Adrenal gland (tissue), 19 donors: ENCODE measurements at regions of chr9 and their contacts with region 1.

Region 1: DNA sequence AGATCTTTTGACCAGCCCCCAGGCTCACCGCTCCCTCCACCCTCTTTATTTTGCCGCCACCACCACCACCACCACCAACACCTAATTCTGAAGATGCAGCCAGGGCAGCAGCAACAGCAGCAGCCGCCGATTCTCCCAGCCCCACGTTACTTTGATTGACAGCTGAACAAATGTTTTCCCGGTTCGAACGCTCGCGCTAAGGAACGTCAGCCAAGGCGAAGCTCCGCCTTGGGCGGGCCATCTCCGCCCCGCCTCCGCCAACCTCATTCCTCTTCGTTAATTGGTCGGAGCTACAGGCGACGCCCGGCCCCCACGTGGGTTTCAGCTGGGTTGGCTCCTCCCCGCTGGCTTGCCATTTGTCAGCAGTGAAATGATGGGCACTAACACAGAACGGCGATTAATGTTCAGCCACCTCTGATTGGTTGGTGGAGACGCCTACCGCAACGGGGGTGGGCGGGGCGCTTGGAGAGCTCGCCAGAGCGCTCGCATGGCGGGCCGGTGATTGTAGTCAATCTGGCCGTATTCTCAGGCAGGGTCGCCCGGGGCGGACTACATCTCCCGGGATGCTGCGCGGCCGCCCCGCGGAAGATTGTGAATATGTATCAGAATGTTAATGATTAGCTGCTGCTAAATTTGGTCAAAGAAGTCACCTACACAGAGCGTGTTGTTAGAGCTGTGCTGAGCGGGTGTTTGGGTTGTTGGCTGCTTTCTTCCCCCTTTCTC is at the start of gene TLE4:
- DNase-seq: peak; percentile 99 to 100 (median 100)
- H3K4me3 ChIP-seq: peak within 1 kb of the TSS; percentile 78 to 96 (median 85)
- H3K27ac ChIP-seq: peak within 1 kb of the TSS; percentile 81 to 97 (median 90)
- H3K4me1 ChIP-seq: peaks cover 13 to 33% of the 10 kb centered on the region in 2 donors
- H3K27me3 ChIP-seq: no peaks in the 10 kb centered on the region
- CTCF ChIP-seq: no peak
- POLR2A ChIP-seq: peak; percentile 95 to 99
- total RNA-seq, gene TLE4: 38.2 to 70.5 (median 43.4) TPM

Region 2: GRCh38 chr9:78848061-78848460 is 723.4 kb before region 1 on chr9:
- intact Hi-C with region 1: no loop called
- DNase-seq: no peak
- H3K4me3 ChIP-seq: no peak overlapping the region
- H3K27ac ChIP-seq: no peak overlapping the region
- H3K4me1 ChIP-seq: no peaks in the 10 kb centered on the region
- H3K27me3 ChIP-seq: no peaks in the 10 kb centered on the region
- CTCF ChIP-seq: no peak
- POLR2A ChIP-seq: no peak

Region 3: GRCh38 chr9:79686381-79687130 is 115.1 kb after region 1 on chr9:
- intact Hi-C with region 1: loop called in 1 of 2 experiments (anchors 10 kb)
- DNase-seq: peak; percentile 27 to 66 (median 51)
- H3K4me3 ChIP-seq: no peak overlapping the region
- H3K27ac ChIP-seq: peak overlapping the region in 1 of 5 donors; percentile 43
- H3K4me1 ChIP-seq: peaks cover 6 to 28% of the 10 kb centered on the region in 2 donors
- H3K27me3 ChIP-seq: no peaks in the 10 kb centered on the region
- CTCF ChIP-seq: no peak
- POLR2A ChIP-seq: no peak